ENCODE measurements at regions of chr20 and their contacts with region 1.

Region 1: GRCh38 chr20:3786665-3787323 is at the start of gene CENPB:
- DNase-seq: peak; percentile 81
- H3K4me3 ChIP-seq: peak within 1 kb of the TSS; percentile 61 to 80 (median 79)
- H3K27ac ChIP-seq: peak within 1 kb of the TSS; percentile 2
- H3K4me1 ChIP-seq: peaks cover 30% of the 10 kb centered on the region
- H3K27me3 ChIP-seq: no peaks in the 10 kb centered on the region
- CTCF ChIP-seq: peak; percentile 60 to 64
- total RNA-seq, gene CENPB: 56.8 to 72.2 TPM

Region 2: GRCh38 chr20:3846740-3847428 is 60.1 kb after region 1 on chr20 and contains the start of gene MAVS:
- CTCF ChIA-PET with region 1: no interaction called
- dilution Hi-C with region 1: no loop called
- in situ Hi-C with region 1: loop called in 1 of 2 experiments (anchors 10 kb)
- intact Hi-C with region 1: loop called (anchors 2 kb)
- DNase-seq: peak; percentile 73
- H3K4me3 ChIP-seq: peak within 1 kb of the TSS; percentile 89 to 92 (median 90)
- H3K27ac ChIP-seq: peak within 1 kb of the TSS; percentile 56
- H3K4me1 ChIP-seq: peaks cover 10% of the 10 kb centered on the region
- H3K27me3 ChIP-seq: no peaks in the 10 kb centered on the region
- CTCF ChIP-seq: peak in 1 of 2 donors; percentile 3
- total RNA-seq, gene MAVS: 27.7 to 37.9 TPM

Region 3: GRCh38 chr20:3854462-3854871 is 67.7 kb after region 1 on chr20:
- CTCF ChIA-PET with region 1: no interaction called
- dilution Hi-C with region 1: no loop called
- in situ Hi-C with region 1: loop called in 1 of 2 experiments (anchors 10 kb)
- intact Hi-C with region 1: loop called (anchors 1 kb)
- DNase-seq: no peak
- H3K4me3 ChIP-seq: no peak overlapping the region
- H3K27ac ChIP-seq: no peak overlapping the region
- H3K4me1 ChIP-seq: no peaks in the 10 kb centered on the region
- H3K27me3 ChIP-seq: no peaks in the 10 kb centered on the region
- CTCF ChIP-seq: no peak

Region 4: DNA sequence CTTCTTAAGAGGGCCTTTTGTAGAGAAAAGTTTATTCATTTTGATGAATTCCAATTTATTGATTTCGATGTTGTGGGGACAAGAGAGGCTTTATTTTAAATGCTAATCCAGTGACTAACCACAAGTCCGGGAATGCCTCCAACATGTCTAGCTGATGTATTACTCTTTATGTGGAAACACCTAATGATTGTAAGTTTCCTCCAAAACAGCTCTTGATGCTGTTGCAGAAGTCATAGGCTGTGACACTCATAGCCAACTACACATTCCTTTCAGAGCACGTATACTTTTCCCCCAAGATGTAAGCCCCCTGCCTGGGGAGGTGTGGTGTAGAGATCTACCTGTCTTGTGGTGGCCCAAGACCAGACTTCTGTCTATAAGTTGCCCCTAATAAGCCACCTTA is 289.9 kb after region 1 on chr20:
- CTCF ChIA-PET with region 1: no interaction called
- dilution Hi-C with region 1: no loop called
- in situ Hi-C with region 1: no loop called
- intact Hi-C with region 1: loop called (anchors 1 kb)
- DNase-seq: peak; percentile 80
- H3K4me3 ChIP-seq: no peak overlapping the region
- H3K27ac ChIP-seq: peak overlapping the region; percentile 1
- H3K4me1 ChIP-seq: peaks cover 5% of the 10 kb centered on the region
- H3K27me3 ChIP-seq: no peaks in the 10 kb centered on the region
- CTCF ChIP-seq: no peak

Region 5: DNA sequence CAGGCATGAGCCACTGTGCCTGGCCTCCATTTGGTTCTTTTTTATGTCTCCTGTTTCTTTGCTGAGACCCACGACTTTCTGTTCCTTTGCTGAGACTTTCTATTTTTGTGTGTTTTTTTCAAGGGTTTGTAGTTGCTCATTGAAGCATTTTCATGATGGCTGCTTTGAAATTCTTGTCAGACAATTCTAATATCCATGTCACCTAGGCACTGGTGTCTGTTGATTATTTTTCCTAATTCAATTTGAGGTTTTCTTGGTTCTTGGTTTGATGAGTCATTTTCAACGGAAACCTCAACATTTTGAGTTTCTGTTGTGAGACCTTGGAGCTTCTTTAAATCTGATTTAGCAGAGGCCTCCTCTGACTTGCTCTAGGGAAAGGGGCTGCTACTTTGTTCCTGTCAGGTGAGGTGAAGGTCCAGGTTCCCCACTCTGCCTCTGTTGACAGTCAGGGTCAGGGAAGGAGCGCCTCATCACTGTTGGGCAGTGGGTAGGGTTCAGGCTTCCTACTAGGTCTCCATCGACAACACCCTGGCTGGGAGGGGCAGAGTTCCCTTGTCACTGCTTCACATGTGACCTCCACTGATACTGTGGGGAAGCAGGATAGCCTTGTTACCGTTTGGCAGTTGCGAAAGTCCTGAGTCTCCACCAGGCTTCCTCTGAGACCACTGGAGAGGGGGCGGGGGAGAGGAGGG is 295.8 kb after region 1 on chr20:
- CTCF ChIA-PET with region 1: no interaction called
- dilution Hi-C with region 1: no loop called
- in situ Hi-C with region 1: no loop called
- intact Hi-C with region 1: loop called (anchors 1 kb)
- DNase-seq: peak; percentile 79
- H3K4me3 ChIP-seq: no peak overlapping the region
- H3K27ac ChIP-seq: peak overlapping the region; percentile 70
- H3K4me1 ChIP-seq: peaks cover 18% of the 10 kb centered on the region
- H3K27me3 ChIP-seq: no peaks in the 10 kb centered on the region
- CTCF ChIP-seq: no peak